Activated CD8-positive, alpha-beta T cell treated with anti-CD3 and anti-CD28 coated beads for 36 hours (primary cell): ENCODE measurements at regions of chr12 and their contacts with region 1.

Region 1: DNA sequence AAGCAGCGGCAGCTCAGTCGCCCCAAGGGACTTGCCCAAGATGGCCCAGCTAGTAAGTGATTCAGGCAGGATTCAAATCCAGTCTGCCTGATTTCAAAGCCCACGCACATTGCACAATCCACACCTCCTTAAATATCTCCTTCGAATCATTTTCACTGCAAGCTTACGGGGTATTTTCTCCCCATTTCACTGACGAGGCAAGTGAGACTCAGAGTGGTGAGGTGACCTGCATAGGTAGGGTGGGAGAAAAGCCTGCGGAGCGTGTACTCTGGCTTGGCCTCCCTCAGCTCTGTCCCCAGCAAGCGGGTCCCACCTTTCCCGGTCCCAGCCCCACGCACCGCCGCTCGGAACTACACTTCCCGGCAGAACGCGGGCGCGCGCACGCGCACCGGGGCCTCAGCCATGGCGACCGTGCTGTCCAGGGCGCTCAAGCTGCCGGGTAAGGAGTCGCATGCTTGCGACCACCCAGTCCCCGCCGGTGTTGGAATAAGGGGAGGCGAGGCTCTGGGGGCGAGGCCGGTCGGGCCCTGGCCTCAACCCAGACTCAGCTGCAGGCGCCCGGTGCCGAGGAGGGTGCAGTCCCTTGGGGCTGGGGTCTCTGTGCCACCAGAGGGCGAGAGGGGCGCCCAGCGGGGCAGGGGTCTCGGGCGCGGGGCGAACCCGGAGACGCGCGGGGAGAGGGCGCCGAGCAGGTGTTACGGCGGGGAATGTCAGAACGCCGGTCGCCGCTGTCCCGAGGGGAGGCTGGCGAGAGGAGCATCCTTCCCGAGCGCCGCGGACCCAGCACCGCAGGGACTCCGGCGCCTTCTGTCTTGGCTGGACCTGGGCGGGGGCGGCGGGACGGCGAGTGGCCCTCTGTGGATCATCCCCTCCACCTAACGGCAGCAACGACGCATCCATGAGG is at the start of gene FAM234B:
- DNase-seq: peak; percentile 81
- ATAC-seq: peak; percentile 95
- H3K4me3 Mint-ChIP-seq: peak within 1 kb of the TSS; percentile 77
- H3K27ac Mint-ChIP-seq: peak within 1 kb of the TSS; percentile 35
- H3K4me1 Mint-ChIP-seq: peaks cover 14% of the 10 kb centered on the region
- H3K27me3 Mint-ChIP-seq: no peaks in the 10 kb centered on the region
- CTCF ChIP-seq: peak; percentile 23
- total RNA-seq, gene FAM234B: 10.0 to 10.7 TPM

Region 2: GRCh38 chr12:13004361-13004760 is 39.9 kb before region 1 on chr12:
- CTCF ChIA-PET with region 1: no interaction called
- POLR2A ChIA-PET with region 1: no interaction called
- intact Hi-C with region 1: no loop called
- DNase-seq: no peak
- ATAC-seq: no peak
- H3K4me3 Mint-ChIP-seq: no peak overlapping the region
- H3K27ac Mint-ChIP-seq: no peak overlapping the region
- H3K4me1 Mint-ChIP-seq: peaks cover 7% of the 10 kb centered on the region
- H3K27me3 Mint-ChIP-seq: peaks cover 8% of the 10 kb centered on the region
- CTCF ChIP-seq: no peak

Region 3: DNA sequence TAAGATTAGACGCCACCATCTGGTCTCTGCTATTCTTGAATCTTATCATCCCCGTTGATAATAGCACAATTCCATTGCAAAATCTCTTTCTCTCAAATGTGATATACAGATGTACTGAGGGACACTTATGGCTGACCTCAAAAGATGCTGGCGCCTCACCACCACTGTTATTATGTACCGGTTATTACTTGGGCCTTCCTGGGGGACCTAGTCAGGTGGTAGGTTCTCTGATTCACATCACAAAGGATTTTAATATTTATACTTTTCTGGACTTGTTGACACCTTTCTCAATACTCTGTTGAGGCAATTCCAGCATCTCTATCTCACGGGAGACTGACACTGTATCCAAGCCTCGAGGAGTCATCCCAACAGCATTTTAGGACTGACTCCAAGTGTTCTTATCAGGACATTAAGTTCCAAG is 21.4 kb before region 1 on chr12:
- CTCF ChIA-PET with region 1: no interaction called
- POLR2A ChIA-PET with region 1: no interaction called
- intact Hi-C with region 1: no loop called
- DNase-seq: no peak
- ATAC-seq: no peak
- H3K4me3 Mint-ChIP-seq: no peak overlapping the region
- H3K27ac Mint-ChIP-seq: no peak overlapping the region
- H3K4me1 Mint-ChIP-seq: no peaks in the 10 kb centered on the region
- H3K27me3 Mint-ChIP-seq: peaks cover 6% of the 10 kb centered on the region
- CTCF ChIP-seq: no peak

Region 4: GRCh38 chr12:13033476-13033875 is 10.8 kb before region 1 on chr12:
- CTCF ChIA-PET with region 1: interaction called, 10 read pairs
- POLR2A ChIA-PET with region 1: interaction called, 3 read pairs
- intact Hi-C with region 1: no loop called
- DNase-seq: no peak
- ATAC-seq: no peak
- H3K4me3 Mint-ChIP-seq: no peak overlapping the region
- H3K27ac Mint-ChIP-seq: no peak overlapping the region
- H3K4me1 Mint-ChIP-seq: no peaks in the 10 kb centered on the region
- H3K27me3 Mint-ChIP-seq: no peaks in the 10 kb centered on the region
- CTCF ChIP-seq: no peak